ENCODE measurements at regions of chr12 and their contacts with region 1.

Region 1: GRCh38 chr12:105876396-105876927 is 262.3 kb downstream of the NUAK1 start:
- DNase-seq: no peak
- ATAC-seq: no peak
- H3K4me3 Mint-ChIP-seq: no peak overlapping the region
- H3K27ac Mint-ChIP-seq: no peak overlapping the region
- H3K4me1 Mint-ChIP-seq: 0 out of 2 replicates have a peak, but pooled peaks cover 3% of the 10 kb centered on the region
- H3K27me3 Mint-ChIP-seq: no peaks in the 10 kb centered on the region
- CTCF ChIP-seq: no peak

Region 2: GRCh38 chr12:105992849-105993740 is 116.6 kb after region 1 on chr12:
- CTCF ChIA-PET with region 1: no interaction called
- POLR2A ChIA-PET with region 1: no interaction called
- DNase-seq: no peak
- ATAC-seq: peak; percentile 74
- H3K4me3 Mint-ChIP-seq: no peak overlapping the region
- H3K27ac Mint-ChIP-seq: no peak overlapping the region
- H3K4me1 Mint-ChIP-seq: peaks cover 23% of the 10 kb centered on the region
- H3K27me3 Mint-ChIP-seq: no peaks in the 10 kb centered on the region; the same call in 1 of the 2 replicates
- CTCF ChIP-seq: no peak

Region 3: DNA sequence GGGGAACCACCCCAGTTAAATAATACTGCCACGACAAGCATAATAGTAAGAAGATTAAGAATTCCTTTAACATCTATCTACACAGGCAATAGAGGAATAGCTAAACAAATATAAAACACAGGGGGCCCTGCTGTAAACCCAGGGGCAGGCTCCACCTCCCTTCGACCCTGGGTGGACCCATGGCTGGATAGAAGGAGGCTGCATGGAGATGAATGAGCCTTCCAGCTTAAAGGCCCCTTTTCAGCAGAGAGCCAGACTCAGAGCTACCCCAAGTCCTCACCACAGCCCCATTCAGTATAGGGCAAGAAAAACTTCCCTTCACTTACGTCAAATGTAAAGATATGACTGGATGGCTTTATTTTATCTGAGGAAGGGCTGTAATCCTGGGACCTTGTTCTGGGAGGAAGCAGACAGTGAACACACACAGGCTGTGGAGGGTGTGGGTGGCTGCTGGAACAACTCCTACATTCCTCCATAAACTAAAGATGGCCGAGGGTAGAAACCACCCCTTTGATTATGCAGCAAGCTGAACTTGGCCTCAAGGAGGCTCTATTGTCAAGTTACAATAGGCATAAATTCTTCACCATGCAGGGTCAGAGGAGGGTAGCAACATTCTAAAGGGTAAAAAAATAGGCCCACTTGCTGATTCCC is 231.8 kb after region 1 on chr12:
- CTCF ChIA-PET with region 1: no interaction called
- POLR2A ChIA-PET with region 1: interaction called, 15 read pairs
- DNase-seq: peak; percentile 43
- ATAC-seq: peak; percentile 85
- H3K4me3 Mint-ChIP-seq: peak overlapping the region; percentile 8; the same call in 1 of the 2 replicates
- H3K27ac Mint-ChIP-seq: peak overlapping the region; percentile 90
- H3K4me1 Mint-ChIP-seq: peaks cover 73% of the 10 kb centered on the region
- H3K27me3 Mint-ChIP-seq: no peaks in the 10 kb centered on the region; the same call in 1 of the 2 replicates
- CTCF ChIP-seq: no peak

Measured in WTC11 (cell line).